CD4-positive, alpha-beta memory T cell (primary cell): ENCODE measurements at regions of chr9 and their contacts with region 1.

Region 1: DNA sequence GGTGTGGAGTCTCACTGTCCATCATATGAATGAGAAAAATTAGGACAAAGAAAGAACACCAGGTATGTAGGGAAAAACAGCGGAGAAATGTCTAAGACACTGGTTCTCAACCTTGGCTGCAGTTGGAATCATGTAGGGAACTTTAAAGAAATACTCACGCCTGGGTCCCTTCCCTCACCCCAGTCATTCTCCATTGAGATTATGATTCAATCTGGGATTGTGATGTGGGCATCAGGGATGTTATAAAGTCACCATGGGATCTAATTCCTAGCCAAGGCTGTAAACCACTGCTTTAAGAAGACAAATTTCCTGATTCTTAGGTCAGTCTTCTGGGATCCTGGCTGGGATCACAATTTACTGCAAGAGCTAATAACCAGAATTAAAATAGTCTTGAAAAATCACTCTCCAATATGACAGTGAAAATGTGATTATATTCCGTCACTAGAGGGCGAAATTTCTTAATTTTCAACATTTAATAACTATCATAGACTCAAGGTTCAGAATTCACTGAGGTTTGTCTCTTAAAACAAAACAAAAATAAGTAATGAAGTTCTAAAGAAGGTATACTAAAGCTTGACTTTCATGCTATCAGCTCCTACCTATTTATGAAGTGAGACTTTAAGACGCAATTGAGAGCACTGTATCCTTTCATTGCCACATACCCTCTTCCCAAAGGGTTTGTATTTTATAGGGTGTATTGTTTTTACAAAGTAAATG is 60.5 kb downstream of the GLDC start:
- DNase-seq: peak in 4 of 5 donors; percentile 16 to 31 (median 24)
- H3K4me3 ChIP-seq: no peak overlapping the region
- H3K4me3 Mint-ChIP-seq: no peak overlapping the region
- H3K27ac ChIP-seq: no peak overlapping the region
- H3K27ac Mint-ChIP-seq: no peak overlapping the region
- H3K4me1 ChIP-seq: no peaks in the 10 kb centered on the region
- H3K4me1 Mint-ChIP-seq: no peaks in the 10 kb centered on the region
- H3K27me3 ChIP-seq: no peaks in the 10 kb centered on the region
- H3K27me3 Mint-ChIP-seq: no peaks in the 10 kb centered on the region

Region 2: DNA sequence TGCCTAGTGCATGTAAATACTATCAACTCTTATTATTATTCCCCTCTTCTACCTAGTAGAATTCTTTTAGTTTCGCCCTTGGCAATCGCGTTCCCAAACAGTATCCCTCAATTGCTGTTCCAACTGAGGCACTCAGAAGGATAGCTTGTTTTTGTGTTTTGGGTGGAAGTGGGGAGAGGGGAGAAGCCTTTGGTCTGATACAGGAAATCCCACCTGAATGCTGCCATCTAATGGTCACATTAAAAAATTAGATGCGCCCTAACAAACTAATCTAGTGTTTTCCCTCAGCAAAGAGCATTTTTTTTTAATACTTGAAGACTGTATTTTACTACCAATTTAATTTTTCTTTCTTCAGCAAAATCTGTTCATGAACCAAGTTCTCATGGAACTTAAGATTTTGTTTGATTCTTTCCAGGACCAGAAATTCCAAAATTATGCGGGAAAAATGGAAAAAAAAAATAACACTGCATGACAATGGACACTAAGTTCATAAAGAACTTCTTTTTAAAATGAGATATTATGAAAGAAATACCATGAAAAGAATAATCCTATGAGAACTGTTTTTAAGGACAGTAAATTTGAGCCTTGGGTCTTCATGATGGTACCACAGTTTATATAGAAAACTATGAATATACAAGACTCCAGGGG is 82.7 kb after region 1 on chr9:
- CTCF ChIA-PET with region 1: interaction called, 16 read pairs
- POLR2A ChIA-PET with region 1: no interaction called
- intact Hi-C with region 1: loop called (anchors 1 kb)
- DNase-seq: peak in 1 of 5 donors; percentile 13
- H3K4me3 ChIP-seq: no peak overlapping the region
- H3K4me3 Mint-ChIP-seq: no peak overlapping the region
- H3K27ac ChIP-seq: no peak overlapping the region
- H3K27ac Mint-ChIP-seq: no peak overlapping the region
- H3K4me1 ChIP-seq: no peaks in the 10 kb centered on the region
- H3K4me1 Mint-ChIP-seq: peaks cover 0 to 2% (median under 1%) of the 10 kb centered on the region in 4 donors
- H3K27me3 ChIP-seq: no peaks in the 10 kb centered on the region
- H3K27me3 Mint-ChIP-seq: no peaks in the 10 kb centered on the region

Region 3: GRCh38 chr9:6739218-6739617 is 154.2 kb after region 1 on chr9:
- CTCF ChIA-PET with region 1: interaction called, 17 read pairs
- POLR2A ChIA-PET with region 1: interaction called, 3 read pairs
- intact Hi-C with region 1: loop called (anchors 1 kb)
- DNase-seq: no peak
- H3K4me3 ChIP-seq: no peak overlapping the region
- H3K4me3 Mint-ChIP-seq: no peak overlapping the region
- H3K27ac ChIP-seq: no peak overlapping the region
- H3K27ac Mint-ChIP-seq: no peak overlapping the region
- H3K4me1 ChIP-seq: no peaks in the 10 kb centered on the region
- H3K4me1 Mint-ChIP-seq: no peaks in the 10 kb centered on the region
- H3K27me3 ChIP-seq: no peaks in the 10 kb centered on the region
- H3K27me3 Mint-ChIP-seq: peaks cover 2% of the 10 kb centered on the region in 2 donors

Region 4: GRCh38 chr9:7536310-7536939 is 951.4 kb after region 1 on chr9:
- CTCF ChIA-PET with region 1: no interaction called
- POLR2A ChIA-PET with region 1: no interaction called
- intact Hi-C with region 1: loop called (anchors 5 kb)
- DNase-seq: peak in 3 of 5 donors; percentile 7 to 11 (median 9)
- H3K4me3 ChIP-seq: no peak overlapping the region
- H3K4me3 Mint-ChIP-seq: no peak overlapping the region
- H3K27ac ChIP-seq: no peak overlapping the region
- H3K27ac Mint-ChIP-seq: peak overlapping the region in 1 of 7 donors; percentile 13
- H3K4me1 ChIP-seq: no peaks in the 10 kb centered on the region
- H3K4me1 Mint-ChIP-seq: no peaks in the 10 kb centered on the region
- H3K27me3 ChIP-seq: no peaks in the 10 kb centered on the region
- H3K27me3 Mint-ChIP-seq: peaks cover 5 to 9% of the 10 kb centered on the region in 2 donors